Activated T-helper 1 cell treated with anti-CD3 and anti-CD28 coated beads, Interleukin-12 subunit alpha, Interleukin-12 subunit beta, Interleukin-2, Interleukin-4 antibody, amounts not matched to agents 30 ng/mL and 10 ng/mL and 1 ng/mL, durations not matched to agents 14 hours and 24 hours and 36 hours (primary cell): ENCODE measurements at regions of chr10 and their contacts with region 1.

Region 1: DNA sequence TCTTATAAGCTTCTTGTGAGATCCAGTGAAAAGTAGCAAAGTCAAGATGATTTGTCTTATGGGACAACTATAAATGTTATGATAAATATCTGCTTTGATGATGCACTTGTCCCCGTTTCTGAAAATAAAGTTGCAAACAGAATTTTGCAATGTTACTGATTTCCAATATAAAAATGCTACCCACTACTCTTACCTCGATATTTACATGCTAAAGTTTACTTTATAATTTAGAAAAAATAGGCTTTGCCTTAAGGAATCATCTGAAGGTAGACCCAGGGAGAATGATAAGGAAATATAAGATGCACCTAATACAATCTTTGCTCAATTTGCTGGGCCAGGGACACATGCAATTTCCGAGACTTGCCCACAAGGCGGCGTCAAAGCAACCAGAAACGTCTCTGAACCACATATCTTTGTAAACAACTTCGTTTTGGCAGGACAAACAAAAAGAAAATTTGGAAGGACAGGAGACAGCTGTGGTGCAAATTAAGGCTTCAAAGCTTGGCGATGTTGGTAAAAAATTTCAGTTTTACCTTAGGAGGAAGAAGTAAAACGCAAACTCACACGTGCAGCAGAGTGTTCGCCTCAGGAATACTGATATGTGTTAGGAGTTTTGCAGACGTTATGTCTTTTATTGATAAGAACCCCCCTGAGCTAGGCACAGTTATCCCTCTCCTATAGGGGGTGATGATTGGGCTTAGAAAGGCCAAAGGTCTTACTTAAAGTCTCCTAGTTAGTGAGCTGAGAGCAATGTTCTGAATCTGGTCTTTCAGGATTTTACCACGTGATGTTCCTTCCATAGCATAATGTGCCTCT is 134.4 kb downstream of the PRKCQ start:
- DNase-seq: peak; percentile 30
- H3K4me3 Mint-ChIP-seq: no peak overlapping the region
- H3K27ac Mint-ChIP-seq: peak overlapping the region; percentile 36
- H3K4me1 Mint-ChIP-seq: peaks cover 34% of the 10 kb centered on the region
- H3K27me3 Mint-ChIP-seq: no peaks in the 10 kb centered on the region

Region 2: DNA sequence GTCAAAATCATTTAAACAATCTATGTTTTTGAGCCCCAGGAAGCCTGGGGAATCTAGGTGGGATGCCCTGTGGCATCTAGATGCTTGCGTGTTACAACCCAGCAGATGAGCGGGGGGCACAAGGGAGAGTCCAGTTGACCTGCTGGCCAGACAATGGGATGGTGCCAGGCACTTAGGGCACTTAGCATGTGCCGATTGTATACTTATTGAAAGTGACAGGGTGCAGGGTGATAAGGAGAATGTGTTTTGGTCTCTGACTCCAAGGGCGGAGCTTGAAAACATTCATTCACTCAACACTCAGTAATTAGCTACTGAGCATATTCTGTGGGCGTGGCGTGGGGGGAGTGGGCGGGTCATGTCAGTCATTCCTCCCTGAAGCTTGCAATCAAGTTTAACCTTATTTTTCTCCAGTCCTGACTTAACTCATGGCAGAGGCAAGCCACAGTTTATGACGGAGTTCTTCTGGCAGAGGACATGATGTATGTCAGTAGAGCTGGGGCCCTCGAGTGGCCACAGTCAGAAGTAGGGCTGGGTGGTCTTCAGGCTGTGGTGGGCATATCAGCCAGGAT is 19.2 kb after region 1 on chr10:
- intact Hi-C with region 1: loop called (anchors 2 kb)
- DNase-seq: no peak
- H3K4me3 Mint-ChIP-seq: no peak overlapping the region
- H3K27ac Mint-ChIP-seq: no peak overlapping the region
- H3K4me1 Mint-ChIP-seq: peaks cover 38% of the 10 kb centered on the region
- H3K27me3 Mint-ChIP-seq: no peaks in the 10 kb centered on the region

Region 3: DNA sequence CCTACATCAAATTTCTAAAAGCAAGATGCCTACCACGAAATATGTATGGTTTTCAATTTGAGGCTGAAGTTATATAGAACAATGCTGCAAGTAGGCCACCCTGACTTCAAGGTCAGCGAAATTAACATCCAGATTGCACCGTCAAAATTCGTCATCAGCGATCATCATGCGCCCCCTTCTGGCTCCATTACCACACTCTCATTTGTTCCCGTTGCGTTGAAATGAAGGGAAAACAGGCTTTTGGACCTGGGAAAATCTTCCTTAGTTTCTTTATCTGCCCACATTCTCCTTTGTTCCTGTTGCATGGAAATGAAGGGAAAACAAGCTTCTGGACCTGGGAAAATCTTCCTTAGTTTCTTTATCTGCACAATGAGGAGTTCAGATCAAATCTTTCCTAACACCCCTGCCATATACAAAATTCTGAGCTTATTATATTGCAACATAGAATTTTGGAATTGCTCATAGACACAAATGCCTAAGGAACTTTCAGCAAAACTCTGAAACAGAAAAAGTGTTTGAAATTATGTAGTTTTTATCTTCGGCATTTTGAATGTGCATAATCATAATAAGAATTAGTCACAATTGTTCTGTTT is 232.6 kb after region 1 on chr10:
- intact Hi-C with region 1: loop called (anchors 1 kb)
- DNase-seq: peak; percentile 31
- H3K4me3 Mint-ChIP-seq: no peak overlapping the region
- H3K27ac Mint-ChIP-seq: no peak overlapping the region
- H3K4me1 Mint-ChIP-seq: peaks cover 19% of the 10 kb centered on the region
- H3K27me3 Mint-ChIP-seq: peaks cover 38% of the 10 kb centered on the region